PC-3 (cell line): ENCODE measurements at regions of chr1 and their contacts with region 1.

Region 1: GRCh38 chr1:214808845-214809460 is 206.0 kb downstream of the CENPF start:
- DNase-seq: peak; percentile 85
- ATAC-seq: peak; percentile 99
- H3K4me3 ChIP-seq: no peak overlapping the region
- H3K27ac ChIP-seq: no peak overlapping the region
- H3K4me1 ChIP-seq: no peaks in the 10 kb centered on the region
- H3K27me3 ChIP-seq: no peaks in the 10 kb centered on the region
- CTCF ChIP-seq: peak; percentile 96

Region 2: DNA sequence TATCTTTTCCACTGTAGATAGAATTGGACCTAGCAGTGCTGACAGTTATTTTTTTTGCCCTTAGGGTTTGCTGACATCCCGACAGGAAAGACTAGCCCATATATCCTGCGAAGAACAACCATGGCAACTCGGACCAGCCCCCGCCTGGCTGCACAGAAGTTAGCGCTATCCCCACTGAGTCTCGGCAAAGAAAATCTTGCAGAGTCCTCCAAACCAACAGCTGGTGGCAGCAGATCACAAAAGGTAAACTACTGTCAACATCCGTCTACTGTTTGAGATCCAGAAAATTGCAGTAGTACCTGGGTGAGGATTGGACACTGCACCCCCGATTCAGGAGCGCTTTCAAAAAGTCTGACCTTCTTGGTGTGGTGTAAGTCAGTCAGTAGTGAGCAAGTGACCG is 150.2 kb before region 1 on chr1:
- CTCF ChIA-PET with region 1: interaction called, 3 read pairs
- POLR2A ChIA-PET with region 1: no interaction called
- intact Hi-C with region 1: loop called (anchors 1 kb)
- DNase-seq: peak; percentile 46
- ATAC-seq: peak; percentile 70
- H3K4me3 ChIP-seq: no peak overlapping the region
- H3K27ac ChIP-seq: no peak overlapping the region
- H3K4me1 ChIP-seq: no peaks in the 10 kb centered on the region
- H3K27me3 ChIP-seq: no peaks in the 10 kb centered on the region
- CTCF ChIP-seq: peak; percentile 65

Region 3: GRCh38 chr1:214727274-214727673 is 81.7 kb before region 1 on chr1:
- CTCF ChIA-PET with region 1: no interaction called
- POLR2A ChIA-PET with region 1: no interaction called
- intact Hi-C with region 1: no loop called
- DNase-seq: peak; percentile 43
- ATAC-seq: peak; percentile 24; the same call in 1 of the 2 replicates
- H3K4me3 ChIP-seq: no peak overlapping the region
- H3K27ac ChIP-seq: no peak overlapping the region
- H3K4me1 ChIP-seq: peaks cover 5% of the 10 kb centered on the region; the same call in 1 of the 2 replicates
- H3K27me3 ChIP-seq: no peaks in the 10 kb centered on the region
- CTCF ChIP-seq: no peak

Region 4: DNA sequence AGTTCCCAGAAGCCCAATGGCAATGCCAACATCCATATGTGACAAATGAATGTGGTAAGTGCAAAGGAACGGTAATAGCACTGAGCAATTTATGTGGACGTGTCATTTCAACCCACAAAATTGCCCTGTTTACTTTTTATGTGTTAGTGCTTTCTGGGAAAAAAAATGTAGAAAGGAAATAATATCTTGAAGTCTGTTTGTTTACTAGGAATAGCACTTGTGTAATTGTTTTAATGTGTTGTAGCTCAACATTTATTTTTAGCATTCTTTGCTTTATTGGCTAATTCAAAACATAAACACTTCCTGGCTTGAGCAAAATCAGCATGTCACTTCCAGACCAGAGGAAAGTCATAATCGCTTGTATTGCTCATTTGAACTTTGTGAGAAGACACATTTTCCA is 48.8 kb after region 1 on chr1:
- CTCF ChIA-PET with region 1: interaction called, 4 read pairs
- POLR2A ChIA-PET with region 1: interaction called, 22 read pairs
- intact Hi-C with region 1: no loop called
- DNase-seq: peak; percentile 61
- ATAC-seq: peak; percentile 31; the same call in 1 of the 2 replicates
- H3K4me3 ChIP-seq: no peak overlapping the region
- H3K27ac ChIP-seq: no peak overlapping the region
- H3K4me1 ChIP-seq: peaks cover 21% of the 10 kb centered on the region
- H3K27me3 ChIP-seq: no peaks in the 10 kb centered on the region
- CTCF ChIP-seq: no peak

Region 5: GRCh38 chr1:215076318-215076717 is 267.4 kb after region 1 on chr1:
- CTCF ChIA-PET with region 1: interaction called, 13 read pairs
- POLR2A ChIA-PET with region 1: no interaction called
- intact Hi-C with region 1: loop called (anchors 1 kb)
- DNase-seq: peak; percentile 80
- ATAC-seq: peak; percentile 96
- H3K4me3 ChIP-seq: no peak overlapping the region
- H3K27ac ChIP-seq: no peak overlapping the region
- H3K4me1 ChIP-seq: no peaks in the 10 kb centered on the region
- H3K27me3 ChIP-seq: no peaks in the 10 kb centered on the region
- CTCF ChIP-seq: peak; percentile 91

Region 6: DNA sequence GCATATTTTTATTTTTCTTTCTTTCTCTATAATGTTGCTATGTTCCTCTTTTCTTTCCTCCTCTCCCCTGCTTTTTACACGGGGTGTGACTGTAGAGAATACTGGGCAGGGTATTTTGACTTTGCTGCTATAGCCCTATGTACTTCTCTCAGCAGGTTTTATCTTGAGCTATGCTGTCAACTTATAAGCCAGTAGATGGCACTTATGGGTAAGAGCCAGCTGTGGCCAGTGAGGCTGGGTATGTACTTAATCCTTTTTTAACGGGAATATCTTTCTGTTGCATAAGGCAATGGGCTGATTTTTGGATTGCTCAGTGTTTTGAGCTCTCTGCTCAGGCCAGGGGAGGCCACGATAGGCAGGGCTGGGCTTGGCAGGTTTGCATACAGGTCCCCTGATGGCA is 372.6 kb after region 1 on chr1:
- CTCF ChIA-PET with region 1: interaction called, 5 read pairs
- POLR2A ChIA-PET with region 1: no interaction called
- intact Hi-C with region 1: loop called (anchors 1 kb)
- DNase-seq: peak; percentile 80
- ATAC-seq: peak; percentile 99
- H3K4me3 ChIP-seq: no peak overlapping the region
- H3K27ac ChIP-seq: no peak overlapping the region
- H3K4me1 ChIP-seq: no peaks in the 10 kb centered on the region
- H3K27me3 ChIP-seq: no peaks in the 10 kb centered on the region
- CTCF ChIP-seq: peak; percentile 91